ENCODE measurements at regions of chr2 and their contacts with region 1.

Region 1: GRCh38 chr2:148644883-148645538 is 460 bp downstream of the EPC2 start:
- DNase-seq: peak; percentile 93 to 98 (median 95)
- H3K4me3 ChIP-seq: peak overlapping the region; percentile 88 to 99
- H3K4me3 Mint-ChIP-seq: peak overlapping the region; percentile 91 to 99 (median 95)
- H3K27ac ChIP-seq: peak overlapping the region; percentile 87
- H3K27ac Mint-ChIP-seq: peak overlapping the region; percentile 93 to 99 (median 97)
- H3K4me1 ChIP-seq: peaks cover 48% of the 10 kb centered on the region
- H3K4me1 Mint-ChIP-seq: peaks cover 24 to 45% (median 36%) of the 10 kb centered on the region in 4 donors
- H3K27me3 ChIP-seq: no peaks in the 10 kb centered on the region
- H3K27me3 Mint-ChIP-seq: no peaks in the 10 kb centered on the region

Region 2: DNA sequence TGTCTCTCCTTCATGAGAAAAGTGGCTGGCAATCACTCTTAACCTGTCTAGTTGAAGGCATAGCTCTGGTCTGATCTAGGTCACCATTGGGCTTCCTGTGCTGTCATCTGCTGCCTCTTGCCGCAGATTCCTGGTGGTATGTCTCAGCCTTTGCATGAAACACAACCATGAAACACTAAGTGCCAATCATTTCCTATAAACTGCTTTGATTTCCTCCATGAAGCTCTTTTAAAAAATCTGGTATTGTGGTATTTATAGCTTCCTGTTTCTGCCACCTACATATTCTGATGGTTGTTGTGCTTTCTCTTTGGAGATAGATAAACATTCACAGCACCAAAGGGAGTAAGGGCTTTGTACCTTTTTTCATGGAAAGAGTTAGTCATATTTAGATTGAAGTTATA is 120.5 kb before region 1 on chr2:
- CTCF ChIA-PET with region 1: interaction called, 4 read pairs
- POLR2A ChIA-PET with region 1: interaction called, 121 read pairs
- intact Hi-C with region 1: loop called (anchors 1 kb)
- DNase-seq: peak; percentile 79 to 90 (median 87)
- H3K4me3 ChIP-seq: peak overlapping the region in 1 of 2 donors; percentile 26
- H3K4me3 Mint-ChIP-seq: peak overlapping the region; percentile 22 to 89 (median 72)
- H3K27ac ChIP-seq: peak overlapping the region; percentile 60
- H3K27ac Mint-ChIP-seq: peak overlapping the region; percentile 85 to 99 (median 95)
- H3K4me1 ChIP-seq: peaks cover 92% of the 10 kb centered on the region
- H3K4me1 Mint-ChIP-seq: peaks cover 74 to 90% (median 84%) of the 10 kb centered on the region in 4 donors
- H3K27me3 ChIP-seq: no peaks in the 10 kb centered on the region
- H3K27me3 Mint-ChIP-seq: no peaks in the 10 kb centered on the region

Region 3: DNA sequence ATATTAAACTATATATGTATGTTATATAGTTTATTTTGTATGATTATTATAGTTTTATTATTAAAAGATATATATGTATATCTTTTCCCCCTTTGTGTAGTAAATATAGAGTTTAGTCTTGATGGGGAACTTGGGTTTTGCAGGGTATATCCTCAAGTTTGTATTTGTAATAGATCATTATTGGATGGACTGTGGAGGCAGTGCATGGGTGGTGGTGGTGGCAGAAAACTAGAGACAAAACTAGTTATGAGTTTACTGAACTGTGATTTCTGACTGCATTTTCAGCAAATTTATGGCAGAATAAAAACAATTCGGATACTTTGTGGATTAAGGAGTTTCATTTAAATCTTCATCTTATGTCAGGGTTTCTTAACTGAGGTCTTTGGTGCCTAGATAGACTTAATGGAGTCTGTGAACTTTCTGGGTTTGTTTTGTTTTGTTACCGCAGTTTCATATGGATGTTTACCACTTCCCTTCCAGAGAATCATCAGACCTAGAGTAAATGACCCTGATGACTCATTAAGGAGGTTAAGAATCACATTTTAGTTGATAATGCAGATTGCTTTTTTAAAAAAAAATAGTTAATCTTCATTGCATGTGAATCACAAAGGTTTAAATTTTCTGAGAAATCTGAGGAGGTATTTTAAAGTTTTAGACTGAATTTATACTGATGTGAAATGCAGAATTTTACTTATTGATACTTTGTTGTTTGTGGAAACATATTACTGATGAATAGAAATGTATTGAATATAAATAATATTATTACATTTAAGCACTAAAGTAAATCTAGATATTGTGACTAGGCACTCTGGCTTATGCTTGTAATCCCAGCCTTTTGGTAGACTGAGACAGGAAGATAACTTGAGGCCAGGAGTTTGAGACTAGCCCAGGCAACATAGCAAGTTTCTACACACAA is 14.1 kb after region 1 on chr2:
- CTCF ChIA-PET with region 1: interaction called, 6 read pairs
- POLR2A ChIA-PET with region 1: interaction called, 43 read pairs
- intact Hi-C with region 1: loop called (anchors 1 kb)
- DNase-seq: peak in 4 of 5 donors; percentile 51 to 74 (median 62)
- H3K4me3 ChIP-seq: no peak overlapping the region
- H3K4me3 Mint-ChIP-seq: peak overlapping the region in 7 of 8 donors; percentile 60 to 82 (median 69)
- H3K27ac ChIP-seq: peak overlapping the region; percentile 20
- H3K27ac Mint-ChIP-seq: peak overlapping the region; percentile 81 to 96 (median 93)
- H3K4me1 ChIP-seq: peaks cover 79% of the 10 kb centered on the region
- H3K4me1 Mint-ChIP-seq: peaks cover 66 to 86% (median 74%) of the 10 kb centered on the region in 4 donors
- H3K27me3 ChIP-seq: no peaks in the 10 kb centered on the region
- H3K27me3 Mint-ChIP-seq: no peaks in the 10 kb centered on the region

Region 4: GRCh38 chr2:148874868-148875341 is 229.9 kb after region 1 on chr2 and contains the start of gene KIF5C:
- CTCF ChIA-PET with region 1: no interaction called
- POLR2A ChIA-PET with region 1: interaction called, 9 read pairs
- intact Hi-C with region 1: loop called (anchors 1 kb)
- DNase-seq: peak; percentile 78 to 83 (median 81)
- H3K4me3 ChIP-seq: peak within 1 kb of the TSS; percentile 54 to 70
- H3K4me3 Mint-ChIP-seq: peak within 1 kb of the TSS; percentile 90 to 97 (median 92)
- H3K27ac ChIP-seq: peak within 1 kb of the TSS; percentile 47
- H3K27ac Mint-ChIP-seq: peak within 1 kb of the TSS; percentile 78 to 97 (median 92)
- H3K4me1 ChIP-seq: peaks cover 8% of the 10 kb centered on the region
- H3K4me1 Mint-ChIP-seq: peaks cover 6 to 20% (median 15%) of the 10 kb centered on the region in 4 donors
- H3K27me3 ChIP-seq: no peaks in the 10 kb centered on the region
- H3K27me3 Mint-ChIP-seq: peaks cover 6 to 10% of the 10 kb centered on the region in 2 donors
- total RNA-seq, gene KIF5C: 21.1 to 21.3 TPM

Region 5: GRCh38 chr2:149587220-149587949 is 942.4 kb after region 1 on chr2 and contains the start of gene MMADHC:
- CTCF ChIA-PET with region 1: no interaction called
- POLR2A ChIA-PET with region 1: interaction called, 3 read pairs
- intact Hi-C with region 1: loop called (anchors 5 kb)
- DNase-seq: peak; percentile 90 to 93 (median 93)
- H3K4me3 ChIP-seq: peak within 1 kb of the TSS; percentile 90 to 91
- H3K4me3 Mint-ChIP-seq: peak within 1 kb of the TSS; percentile 93 to 100 (median 98)
- H3K27ac ChIP-seq: peak within 1 kb of the TSS; percentile 98
- H3K27ac Mint-ChIP-seq: peak within 1 kb of the TSS; percentile 96 to 100 (median 99)
- H3K4me1 ChIP-seq: peaks cover 40% of the 10 kb centered on the region
- H3K4me1 Mint-ChIP-seq: peaks cover 22 to 55% (median 42%) of the 10 kb centered on the region in 4 donors
- H3K27me3 ChIP-seq: no peaks in the 10 kb centered on the region
- H3K27me3 Mint-ChIP-seq: peaks cover 3 to 17% of the 10 kb centered on the region in 2 donors
- total RNA-seq, gene MMADHC: 66.4 to 69.4 TPM

Measured in CD4-positive, alpha-beta memory T cell (primary cell).